PC-9 (cell line): ENCODE measurements at regions of chr2 and their contacts with region 1.

Region 1: GRCh38 chr2:197310271-197310985 is at the start of gene ANKRD44:
- DNase-seq: peak; percentile 40 to 73
- H3K4me3 ChIP-seq: peak within 1 kb of the TSS; percentile 59; the same call in 1 of the 2 replicates
- H3K27ac ChIP-seq: no peak within 1 kb of the TSS
- H3K4me1 ChIP-seq: peaks cover 11% of the 10 kb centered on the region; the same call in 1 of the 2 replicates
- H3K27me3 ChIP-seq: no peaks in the 10 kb centered on the region
- CTCF ChIP-seq: no peak
- total RNA-seq, gene ANKRD44: 1.7 and 3.4 TPM in 2 replicates

Region 2: DNA sequence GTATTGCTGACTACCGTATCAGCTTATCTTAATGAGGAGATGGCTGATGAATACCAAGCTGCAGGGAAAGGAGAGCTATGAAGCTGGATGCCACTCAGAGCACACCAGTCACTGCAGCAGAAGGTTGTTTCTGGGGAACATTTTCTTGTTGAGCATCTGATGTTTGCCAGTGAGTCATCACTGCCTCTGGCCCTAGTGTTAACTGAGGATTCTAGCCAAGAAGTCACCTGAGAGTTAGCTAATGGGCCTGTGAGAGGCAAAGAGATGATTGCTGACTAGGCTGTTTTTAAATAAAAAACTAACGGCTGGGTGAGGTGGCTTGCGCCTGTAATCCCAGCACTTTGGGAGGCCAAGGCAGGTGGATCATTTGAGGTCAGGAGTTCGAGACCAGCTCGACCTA is 633.0 kb before region 1 on chr2:
- CTCF ChIA-PET with region 1: no interaction called
- POLR2A ChIA-PET with region 1: no interaction called
- intact Hi-C with region 1: no loop called
- DNase-seq: no peak
- H3K4me3 ChIP-seq: no peak overlapping the region
- H3K27ac ChIP-seq: no peak overlapping the region
- H3K4me1 ChIP-seq: no peaks in the 10 kb centered on the region
- H3K27me3 ChIP-seq: no peaks in the 10 kb centered on the region
- CTCF ChIP-seq: no peak

Region 3: GRCh38 chr2:196902828-196903227 is 407.6 kb before region 1 on chr2:
- CTCF ChIA-PET with region 1: no interaction called
- POLR2A ChIA-PET with region 1: no interaction called
- intact Hi-C with region 1: no loop called
- DNase-seq: peak in 1 of 2 experiments; percentile 56
- H3K4me3 ChIP-seq: no peak overlapping the region
- H3K27ac ChIP-seq: no peak overlapping the region
- H3K4me1 ChIP-seq: peaks cover 8% of the 10 kb centered on the region; the same call in 1 of the 2 replicates
- H3K27me3 ChIP-seq: no peaks in the 10 kb centered on the region
- CTCF ChIP-seq: no peak

Region 4: GRCh38 chr2:197121255-197121654 is 189.2 kb before region 1 on chr2:
- CTCF ChIA-PET with region 1: no interaction called
- POLR2A ChIA-PET with region 1: no interaction called
- intact Hi-C with region 1: no loop called
- DNase-seq: no peak
- H3K4me3 ChIP-seq: no peak overlapping the region
- H3K27ac ChIP-seq: no peak overlapping the region
- H3K4me1 ChIP-seq: no peaks in the 10 kb centered on the region
- H3K27me3 ChIP-seq: no peaks in the 10 kb centered on the region
- CTCF ChIP-seq: no peak

Region 5: DNA sequence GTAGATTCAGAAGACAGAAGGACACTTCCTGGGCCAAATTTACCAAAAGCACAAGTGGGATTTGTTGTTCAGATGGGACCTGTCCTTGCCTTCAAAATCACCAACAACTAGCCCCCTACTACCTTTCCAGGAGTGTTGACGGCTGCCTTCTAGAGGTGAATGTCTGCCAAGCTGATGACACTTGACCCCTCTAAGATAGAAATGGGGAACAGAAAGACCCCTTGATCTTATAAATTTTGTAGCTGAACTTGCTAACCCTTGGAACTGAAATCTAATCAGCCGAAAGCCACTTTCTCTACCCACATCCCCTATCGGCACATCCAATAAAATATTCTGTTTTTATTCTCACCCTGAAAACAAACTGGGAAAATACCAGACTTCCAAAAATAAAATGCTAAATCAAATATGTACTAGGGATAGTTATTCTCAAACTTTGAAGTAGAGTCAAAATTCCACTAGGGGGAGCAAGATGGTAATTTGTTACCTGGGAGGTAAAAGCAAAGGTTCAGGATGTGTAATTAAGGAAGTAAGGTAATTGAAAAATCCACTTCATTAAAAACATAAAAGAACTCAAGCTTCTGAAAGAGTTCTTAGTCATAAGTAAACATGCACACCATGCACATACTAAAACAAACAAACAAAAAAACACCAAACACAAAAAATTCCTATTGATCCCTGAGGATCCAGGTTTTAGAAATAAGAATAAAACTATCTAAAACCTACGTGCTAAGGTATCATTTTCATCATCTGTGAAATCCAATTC is 119.1 kb before region 1 on chr2:
- CTCF ChIA-PET with region 1: no interaction called
- POLR2A ChIA-PET with region 1: no interaction called
- intact Hi-C with region 1: loop called (anchors 1 kb)
- DNase-seq: peak in 1 of 2 experiments; percentile 44
- H3K4me3 ChIP-seq: no peak overlapping the region
- H3K27ac ChIP-seq: no peak overlapping the region
- H3K4me1 ChIP-seq: no peaks in the 10 kb centered on the region
- H3K27me3 ChIP-seq: no peaks in the 10 kb centered on the region
- CTCF ChIP-seq: peak; percentile 77

Region 6: GRCh38 chr2:197453161-197453914 is 142.9 kb after region 1 on chr2 and contains the start of gene COQ10B:
- CTCF ChIA-PET with region 1: no interaction called
- POLR2A ChIA-PET with region 1: no interaction called
- intact Hi-C with region 1: no loop called
- DNase-seq: peak; percentile 98
- H3K4me3 ChIP-seq: peak within 1 kb of the TSS; percentile 97
- H3K27ac ChIP-seq: peak within 1 kb of the TSS; percentile 97
- H3K4me1 ChIP-seq: peaks cover 10% of the 10 kb centered on the region
- H3K27me3 ChIP-seq: no peaks in the 10 kb centered on the region
- CTCF ChIP-seq: no peak; the same call in 1 of the 2 replicates
- total RNA-seq, gene COQ10B: 14.8 and 18.1 TPM in 2 replicates